Endothelial cell of umbilical vein (primary cell): ENCODE measurements at regions of chr1 and their contacts with region 1.

Region 1: GRCh38 chr1:186375088-186375953 is at the starts of genes ODR4 and TPR:
- DNase-seq: peak; percentile 99
- H3K4me3 ChIP-seq: peak within 1 kb of the TSS; percentile 65 to 91 (median 68)
- H3K27ac ChIP-seq: peak within 1 kb of the TSS; percentile 63
- H3K4me1 ChIP-seq: peaks cover 18% of the 10 kb centered on the region
- H3K27me3 ChIP-seq: no peaks in the 10 kb centered on the region
- CTCF ChIP-seq: peak; percentile 90 to 98
- POLR2A ChIP-seq: peak; percentile 83
- total RNA-seq, gene ODR4: 17.3 and 18.6 TPM in 2 replicates
- total RNA-seq, gene TPR: 107 and 118 TPM in 2 replicates

Region 2: GRCh38 chr1:185957441-185958363 is 417.6 kb before region 1 on chr1:
- CTCF ChIA-PET with region 1: no interaction called
- POLR2A ChIA-PET with region 1: no interaction called
- dilution Hi-C with region 1: no loop called
- intact Hi-C with region 1: no loop called
- DNase-seq: no peak
- H3K4me3 ChIP-seq: no peak overlapping the region
- H3K27ac ChIP-seq: no peak overlapping the region
- H3K4me1 ChIP-seq: no peaks in the 10 kb centered on the region
- H3K27me3 ChIP-seq: no peaks in the 10 kb centered on the region
- CTCF ChIP-seq: no peak
- POLR2A ChIP-seq: no peak

Region 3: DNA sequence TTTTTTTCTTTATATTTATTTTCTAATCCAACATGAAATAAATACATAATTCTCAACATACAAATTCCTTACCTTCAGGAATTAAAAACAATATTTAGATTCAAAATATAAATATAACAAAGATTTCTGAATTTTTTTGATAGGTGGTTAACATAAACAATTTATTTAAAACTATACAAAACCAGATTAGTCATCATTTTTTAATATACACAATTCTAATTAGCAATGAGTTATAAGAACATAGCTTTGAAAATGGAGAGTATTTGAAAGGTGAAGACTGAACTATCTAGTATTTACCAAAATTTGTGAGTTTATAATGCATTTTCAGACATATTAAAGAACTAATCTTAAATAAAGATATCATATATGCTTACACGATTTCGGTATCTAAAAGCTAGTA is 37.8 kb before region 1 on chr1:
- CTCF ChIA-PET with region 1: interaction called, 6 read pairs
- POLR2A ChIA-PET with region 1: no interaction called
- dilution Hi-C with region 1: no loop called
- intact Hi-C with region 1: loop called (anchors 5 kb)
- DNase-seq: no peak
- H3K4me3 ChIP-seq: no peak overlapping the region
- H3K27ac ChIP-seq: no peak overlapping the region
- H3K4me1 ChIP-seq: no peaks in the 10 kb centered on the region
- H3K27me3 ChIP-seq: no peaks in the 10 kb centered on the region
- CTCF ChIP-seq: no peak
- POLR2A ChIP-seq: no peak

Region 4: GRCh38 chr1:186391841-186392240 is 16.5 kb after region 1 on chr1:
- CTCF ChIA-PET with region 1: interaction called, 15 read pairs
- POLR2A ChIA-PET with region 1: no interaction called
- dilution Hi-C with region 1: no loop called
- intact Hi-C with region 1: no loop called
- DNase-seq: no peak
- H3K4me3 ChIP-seq: no peak overlapping the region
- H3K27ac ChIP-seq: no peak overlapping the region
- H3K4me1 ChIP-seq: peaks cover 4% of the 10 kb centered on the region
- H3K27me3 ChIP-seq: no peaks in the 10 kb centered on the region
- CTCF ChIP-seq: no peak
- POLR2A ChIP-seq: no peak

Region 5: GRCh38 chr1:186442651-186443114 is 67.4 kb after region 1 on chr1:
- CTCF ChIA-PET with region 1: interaction called, 5 read pairs
- POLR2A ChIA-PET with region 1: no interaction called
- dilution Hi-C with region 1: no loop called
- intact Hi-C with region 1: loop called (anchors 1 kb)
- DNase-seq: peak; percentile 94
- H3K4me3 ChIP-seq: no peak overlapping the region
- H3K27ac ChIP-seq: peak overlapping the region; percentile 71
- H3K4me1 ChIP-seq: peaks cover 33% of the 10 kb centered on the region
- H3K27me3 ChIP-seq: no peaks in the 10 kb centered on the region
- CTCF ChIP-seq: no peak
- POLR2A ChIP-seq: peak; percentile 76

Region 6: GRCh38 chr1:186476264-186477040 is 101.1 kb after region 1 on chr1:
- CTCF ChIA-PET with region 1: interaction called, 6 read pairs
- POLR2A ChIA-PET with region 1: no interaction called
- dilution Hi-C with region 1: no loop called
- intact Hi-C with region 1: loop called (anchors 1 kb)
- DNase-seq: peak; percentile 95
- H3K4me3 ChIP-seq: peak overlapping the region in 1 of 3 experiments; percentile 15
- H3K27ac ChIP-seq: peak overlapping the region; percentile 95
- H3K4me1 ChIP-seq: peaks cover 24% of the 10 kb centered on the region
- H3K27me3 ChIP-seq: no peaks in the 10 kb centered on the region
- CTCF ChIP-seq: no peak
- POLR2A ChIP-seq: no peak

Region 7: DNA sequence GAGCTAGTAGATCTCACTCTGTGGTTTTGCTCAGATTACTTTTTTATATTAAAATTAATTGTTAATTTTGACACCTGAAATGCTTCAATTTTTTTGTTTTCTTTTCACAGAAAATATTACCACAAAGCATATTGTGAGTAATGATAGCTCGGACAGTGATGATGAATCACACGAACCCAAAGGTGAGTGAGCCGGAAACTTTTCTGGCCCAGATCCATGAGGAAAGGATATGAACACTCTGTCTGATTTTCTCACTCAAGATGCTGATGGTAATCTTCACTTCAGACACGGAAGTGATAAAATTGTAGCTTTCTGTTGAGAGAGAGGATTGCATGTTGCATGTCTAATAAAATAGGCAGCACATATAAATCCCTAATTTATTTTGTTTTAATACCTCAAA is 575.2 kb after region 1 on chr1:
- CTCF ChIA-PET with region 1: no interaction called
- POLR2A ChIA-PET with region 1: no interaction called
- dilution Hi-C with region 1: no loop called
- intact Hi-C with region 1: loop called (anchors 1 kb)
- DNase-seq: peak; percentile 89
- H3K4me3 ChIP-seq: no peak overlapping the region
- H3K27ac ChIP-seq: peak overlapping the region; percentile 97
- H3K4me1 ChIP-seq: peaks cover 58% of the 10 kb centered on the region
- H3K27me3 ChIP-seq: no peaks in the 10 kb centered on the region
- CTCF ChIP-seq: no peak
- POLR2A ChIP-seq: no peak

Region 8: GRCh38 chr1:186974774-186975181 is 599.5 kb after region 1 on chr1:
- CTCF ChIA-PET with region 1: interaction called, 11 read pairs
- POLR2A ChIA-PET with region 1: no interaction called
- dilution Hi-C with region 1: no loop called
- intact Hi-C with region 1: no loop called
- DNase-seq: peak; percentile 98
- H3K4me3 ChIP-seq: peak overlapping the region in 1 of 3 experiments; percentile 12
- H3K27ac ChIP-seq: peak overlapping the region; percentile 93
- H3K4me1 ChIP-seq: peaks cover 49% of the 10 kb centered on the region
- H3K27me3 ChIP-seq: no peaks in the 10 kb centered on the region
- CTCF ChIP-seq: no peak
- POLR2A ChIP-seq: peak; percentile 28